ENCODE measurements at regions of chr11 and their contacts with region 1.

Region 1: DNA sequence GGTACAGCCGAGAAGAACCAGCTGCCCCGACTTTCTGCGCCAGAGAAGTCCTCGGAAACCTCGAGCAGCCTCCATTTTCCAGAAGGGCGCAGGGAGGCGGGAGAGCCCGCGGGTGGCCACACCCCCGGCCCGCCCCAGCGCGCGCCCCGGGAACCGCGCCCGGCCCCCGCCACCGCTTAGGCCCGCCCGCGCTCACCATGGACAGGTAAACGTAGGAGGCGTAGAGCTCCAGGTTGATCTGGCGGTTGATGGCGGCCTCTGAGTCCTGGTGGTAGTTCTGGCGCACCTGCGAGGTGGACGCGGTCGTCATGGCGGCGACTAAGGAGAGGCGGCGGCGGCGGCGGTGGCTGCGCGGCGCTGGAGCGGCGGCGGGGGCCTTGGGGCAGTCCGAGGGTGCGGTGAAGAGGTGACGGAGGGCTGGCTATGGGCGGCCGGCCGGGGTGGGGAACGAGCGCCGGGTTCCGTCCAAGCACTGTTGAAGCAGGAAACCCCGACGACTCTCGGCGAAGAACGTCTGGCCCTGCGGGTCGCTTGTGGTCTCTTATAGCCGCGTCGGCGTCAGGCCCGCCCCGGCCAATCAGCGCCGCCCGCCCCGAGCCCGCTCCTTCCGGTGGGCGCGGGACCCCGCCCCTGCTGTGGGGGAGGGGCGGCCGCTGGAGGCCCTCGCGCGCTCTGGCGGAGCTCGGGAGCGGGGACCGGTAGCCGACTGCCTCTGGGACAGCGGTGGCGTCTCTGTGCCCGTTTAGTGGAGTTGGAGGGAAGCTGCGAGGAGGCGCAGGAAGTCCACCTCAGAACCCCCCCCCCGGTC is at the start of gene FTH1:
- DNase-seq: peak; percentile 96
- ATAC-seq: peak; percentile 36
- H3K4me3 ChIP-seq: peak within 1 kb of the TSS; percentile 95
- H3K27ac ChIP-seq: peak within 1 kb of the TSS; percentile 88
- H3K4me1 ChIP-seq: peaks cover 53% of the 10 kb centered on the region
- H3K27me3 ChIP-seq: no peaks in the 10 kb centered on the region
- CTCF ChIP-seq: no peak
- total RNA-seq, gene FTH1: 1,927 and 1,937 TPM in 2 replicates

Region 2: DNA sequence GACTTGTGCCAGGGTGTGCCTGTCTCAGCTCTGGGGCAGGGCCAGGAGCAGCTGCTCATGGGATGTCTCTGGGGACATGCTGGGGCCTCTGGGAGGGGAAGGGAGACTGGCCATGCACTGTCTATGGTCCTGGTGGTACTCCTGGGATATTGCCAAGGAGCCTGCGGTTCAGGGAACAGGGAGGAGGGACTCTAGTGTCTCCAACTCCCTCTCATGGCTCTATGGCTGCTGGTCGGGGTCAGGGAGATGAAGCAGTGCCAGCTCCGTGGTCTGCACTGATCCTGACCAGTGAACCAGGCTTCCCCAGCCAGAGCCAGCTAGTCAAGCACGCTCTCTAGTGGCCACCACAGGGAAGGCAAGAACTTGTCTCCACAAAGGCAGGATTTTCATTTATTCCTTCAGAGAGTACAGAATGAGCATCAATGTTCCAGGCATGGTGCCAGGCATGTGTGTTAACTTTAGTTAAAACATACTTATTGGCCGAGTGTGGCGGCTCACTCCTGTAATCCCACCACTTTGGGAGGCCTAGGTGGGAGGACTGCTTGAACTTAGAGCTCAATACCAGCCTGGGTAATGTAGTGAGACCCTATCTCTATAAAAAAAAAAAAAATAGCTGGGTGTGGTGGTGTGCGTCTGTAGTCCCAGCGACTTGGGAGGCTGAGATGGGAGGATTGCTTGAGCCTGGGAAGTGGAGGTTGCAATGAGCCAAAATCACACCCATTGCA is 19.7 kb before region 1 on chr11:
- CTCF ChIA-PET with region 1: interaction called, 3 read pairs
- POLR2A ChIA-PET with region 1: interaction called, 11 read pairs
- intact Hi-C with region 1: no loop called
- DNase-seq: peak; percentile 92
- ATAC-seq: peak; percentile 85
- H3K4me3 ChIP-seq: no peak overlapping the region
- H3K27ac ChIP-seq: no peak overlapping the region
- H3K4me1 ChIP-seq: peaks cover 7% of the 10 kb centered on the region; the same call in 1 of the 2 replicates
- H3K27me3 ChIP-seq: no peaks in the 10 kb centered on the region
- CTCF ChIP-seq: peak; percentile 97

Region 3: GRCh38 chr11:62025487-62026105 is 58.3 kb after region 1 on chr11:
- CTCF ChIA-PET with region 1: interaction called, 3 read pairs
- POLR2A ChIA-PET with region 1: interaction called, 11 read pairs
- intact Hi-C with region 1: loop called (anchors 1 kb)
- DNase-seq: peak; percentile 92
- ATAC-seq: peak; percentile 97
- H3K4me3 ChIP-seq: peak overlapping the region; percentile 16; the same call in 1 of the 2 replicates
- H3K27ac ChIP-seq: peak overlapping the region; percentile 80
- H3K4me1 ChIP-seq: peaks cover 21% of the 10 kb centered on the region
- H3K27me3 ChIP-seq: no peaks in the 10 kb centered on the region
- CTCF ChIP-seq: no peak

Region 4: GRCh38 chr11:62048065-62048464 is 80.7 kb after region 1 on chr11:
- CTCF ChIA-PET with region 1: no interaction called
- POLR2A ChIA-PET with region 1: interaction called, 10 read pairs
- intact Hi-C with region 1: loop called (anchors 1 kb)
- DNase-seq: peak; percentile 61
- ATAC-seq: peak; percentile 31
- H3K4me3 ChIP-seq: no peak overlapping the region
- H3K27ac ChIP-seq: peak overlapping the region; percentile 97
- H3K4me1 ChIP-seq: peaks cover 73% of the 10 kb centered on the region
- H3K27me3 ChIP-seq: no peaks in the 10 kb centered on the region
- CTCF ChIP-seq: no peak